IMR-90 (cell line): ENCODE measurements at regions of chr3 and their contacts with region 1.

Region 1: GRCh38 chr3:31010491-31010890 is 116.0 kb upstream of the GADL1 start:
- DNase-seq: peak; percentile 52
- ATAC-seq: no peak
- H3K4me3 ChIP-seq: no peak overlapping the region
- H3K27ac ChIP-seq: no peak overlapping the region
- H3K4me1 ChIP-seq: no peaks in the 10 kb centered on the region
- H3K27me3 ChIP-seq: no peaks in the 10 kb centered on the region
- CTCF ChIP-seq: no peak
- POLR2A ChIP-seq: no peak
- RAD21 ChIP-seq: no peak

Region 2: DNA sequence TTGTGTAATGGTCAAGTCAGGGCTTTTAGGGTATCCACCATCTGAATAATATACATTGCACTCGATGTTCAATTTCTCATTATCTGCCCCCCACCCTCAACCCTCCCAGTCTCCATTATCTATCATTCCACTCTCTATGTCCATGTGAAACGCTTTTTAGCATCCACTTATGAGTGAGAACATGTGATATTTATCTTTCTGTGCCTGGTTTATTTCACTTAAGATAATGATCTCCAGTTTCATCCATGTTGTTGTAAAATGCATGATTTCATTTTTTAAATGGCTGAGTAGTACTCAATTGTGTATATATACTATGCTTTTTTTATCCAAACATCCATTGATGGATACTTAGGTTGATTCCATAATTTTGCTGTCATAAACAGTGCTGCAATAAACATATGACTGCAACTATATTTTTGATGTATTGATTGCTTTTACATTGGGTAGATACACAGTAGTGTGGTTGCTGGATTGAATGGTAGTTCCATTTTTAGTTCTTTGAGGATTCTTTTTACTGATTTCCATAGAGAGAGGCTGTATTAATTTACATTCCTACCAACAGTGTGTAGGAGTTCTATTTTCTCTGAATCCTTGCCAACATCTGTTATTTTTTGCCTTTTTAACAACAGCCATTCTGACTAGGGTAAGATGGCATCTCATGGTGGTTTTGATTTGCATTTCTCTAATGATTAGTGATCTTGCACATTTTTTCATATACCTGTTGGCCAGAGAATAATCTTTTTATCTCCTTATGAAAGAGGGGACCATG is 737.0 kb before region 1 on chr3:
- CTCF ChIA-PET with region 1: no interaction called
- POLR2A ChIA-PET with region 1: no interaction called
- dilution Hi-C with region 1: no loop called
- in situ Hi-C with region 1: no loop called
- intact Hi-C with region 1: no loop called
- DNase-seq: peak; percentile 44
- ATAC-seq: peak; percentile 76
- H3K4me3 ChIP-seq: no peak overlapping the region
- H3K27ac ChIP-seq: no peak overlapping the region
- H3K4me1 ChIP-seq: peaks cover 3% of the 10 kb centered on the region; the same call in 1 of the 2 replicates
- H3K27me3 ChIP-seq: no peaks in the 10 kb centered on the region
- CTCF ChIP-seq: no peak
- POLR2A ChIP-seq: no peak
- RAD21 ChIP-seq: no peak

Region 3: GRCh38 chr3:30751610-30752299 is 258.7 kb before region 1 on chr3:
- CTCF ChIA-PET with region 1: no interaction called
- POLR2A ChIA-PET with region 1: no interaction called
- dilution Hi-C with region 1: no loop called
- in situ Hi-C with region 1: no loop called
- intact Hi-C with region 1: no loop called
- DNase-seq: peak; percentile 62
- ATAC-seq: peak; percentile 60
- H3K4me3 ChIP-seq: no peak overlapping the region
- H3K27ac ChIP-seq: no peak overlapping the region
- H3K4me1 ChIP-seq: peaks cover 7% of the 10 kb centered on the region
- H3K27me3 ChIP-seq: no peaks in the 10 kb centered on the region
- CTCF ChIP-seq: peak; percentile 65
- POLR2A ChIP-seq: no peak
- RAD21 ChIP-seq: peak; percentile 70

Region 4: DNA sequence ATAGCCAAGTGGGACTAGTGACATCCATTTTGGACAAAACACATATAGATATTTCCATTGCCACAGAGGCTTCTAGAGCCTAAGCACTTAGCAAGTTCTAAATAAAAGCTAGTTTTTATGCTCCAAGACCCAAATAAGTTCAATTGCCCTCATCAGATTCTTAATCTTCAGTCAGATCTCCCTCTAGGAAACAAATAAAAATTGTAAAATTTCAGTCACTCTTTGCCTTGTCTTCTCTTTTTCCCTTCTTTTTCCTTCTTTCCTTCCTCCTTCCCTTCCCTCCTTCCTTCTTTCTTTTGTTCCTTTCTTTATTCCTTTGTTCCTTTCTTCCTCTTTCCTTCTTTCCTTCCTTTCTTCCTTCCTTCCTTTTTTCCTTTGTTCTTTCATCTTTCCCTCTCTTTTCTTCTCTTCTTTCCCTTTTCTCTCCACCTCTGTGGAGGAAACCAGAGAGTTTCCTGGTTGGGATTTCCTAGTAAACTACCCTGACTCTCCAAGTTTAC is 47.2 kb before region 1 on chr3:
- CTCF ChIA-PET with region 1: no interaction called
- POLR2A ChIA-PET with region 1: no interaction called
- dilution Hi-C with region 1: no loop called
- in situ Hi-C with region 1: no loop called
- intact Hi-C with region 1: loop called (anchors 1 kb)
- DNase-seq: no peak
- ATAC-seq: no peak
- H3K4me3 ChIP-seq: no peak overlapping the region
- H3K27ac ChIP-seq: no peak overlapping the region
- H3K4me1 ChIP-seq: no peaks in the 10 kb centered on the region
- H3K27me3 ChIP-seq: peaks cover 2% of the 10 kb centered on the region; the same call in 1 of the 2 replicates
- CTCF ChIP-seq: no peak
- POLR2A ChIP-seq: no peak
- RAD21 ChIP-seq: no peak

Region 5: GRCh38 chr3:31050296-31050695 is 39.8 kb after region 1 on chr3:
- CTCF ChIA-PET with region 1: no interaction called
- POLR2A ChIA-PET with region 1: no interaction called
- dilution Hi-C with region 1: no loop called
- in situ Hi-C with region 1: no loop called
- intact Hi-C with region 1: loop called (anchors 1 kb)
- DNase-seq: no peak
- ATAC-seq: no peak
- H3K4me3 ChIP-seq: no peak overlapping the region
- H3K27ac ChIP-seq: no peak overlapping the region
- H3K4me1 ChIP-seq: no peaks in the 10 kb centered on the region
- H3K27me3 ChIP-seq: no peaks in the 10 kb centered on the region; the same call in 1 of the 2 replicates
- CTCF ChIP-seq: no peak
- POLR2A ChIP-seq: no peak
- RAD21 ChIP-seq: no peak

Region 6: DNA sequence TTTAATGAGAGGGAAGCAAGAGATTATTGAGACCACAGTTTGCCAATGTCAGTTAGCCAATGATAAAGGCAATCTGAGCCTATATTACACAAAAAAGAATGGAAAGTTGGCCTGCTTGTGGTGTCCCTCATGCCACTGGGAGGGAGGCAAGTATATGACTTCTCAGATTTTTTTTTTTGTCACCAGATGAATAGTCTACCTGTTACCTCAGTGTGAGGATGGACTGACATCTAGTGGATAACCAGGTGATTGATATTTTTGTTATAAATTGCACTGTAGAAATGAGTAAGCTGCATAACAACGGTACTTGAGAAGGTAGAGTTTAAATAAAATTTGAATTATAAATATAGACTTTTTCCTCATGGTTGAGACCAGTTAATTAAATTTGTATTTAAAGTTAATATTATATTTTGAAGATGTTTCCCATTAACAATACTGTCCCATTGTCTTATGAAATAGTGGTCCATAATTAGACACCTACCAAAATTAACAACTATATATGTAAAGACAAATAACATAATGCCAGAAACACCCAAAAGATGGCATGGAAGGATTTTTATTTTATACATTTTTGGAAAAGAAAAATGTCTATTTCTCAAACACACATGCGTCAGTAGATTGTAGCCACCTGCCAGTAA is 121.8 kb after region 1 on chr3:
- CTCF ChIA-PET with region 1: no interaction called
- POLR2A ChIA-PET with region 1: no interaction called
- dilution Hi-C with region 1: no loop called
- in situ Hi-C with region 1: no loop called
- intact Hi-C with region 1: no loop called
- DNase-seq: peak; percentile 53
- ATAC-seq: peak; percentile 42; the same call in 1 of the 2 replicates
- H3K4me3 ChIP-seq: no peak overlapping the region
- H3K27ac ChIP-seq: no peak overlapping the region
- H3K4me1 ChIP-seq: no peaks in the 10 kb centered on the region
- H3K27me3 ChIP-seq: no peaks in the 10 kb centered on the region; the same call in 1 of the 2 replicates
- CTCF ChIP-seq: peak; percentile 60
- POLR2A ChIP-seq: no peak
- RAD21 ChIP-seq: peak; percentile 87